ENCODE measurements at regions of chr5 and their contacts with region 1.

Region 1: GRCh38 chr5:135551593-135552447 is 16.1 kb upstream of the NEUROG1 start:
- DNase-seq: peak; percentile 78

Region 2: GRCh38 chr5:135356522-135357318 is 195.1 kb before region 1 on chr5:
- in situ Hi-C with region 1: no loop called
- DNase-seq: peak; percentile 46

Region 3: GRCh38 chr5:135466178-135467050 is 85.4 kb before region 1 on chr5:
- in situ Hi-C with region 1: loop called (anchors 5 kb)
- DNase-seq: peak; percentile 80

Region 4: GRCh38 chr5:135497971-135498625 is 53.7 kb before region 1 on chr5:
- in situ Hi-C with region 1: no loop called
- DNase-seq: peak; percentile 41

Region 5: GRCh38 chr5:135847976-135848375 is 296.2 kb after region 1 on chr5:
- in situ Hi-C with region 1: loop called (anchors 5 kb)
- DNase-seq: no peak